ENCODE measurements at regions of chr4 and their contacts with region 1.

Region 1: GRCh38 chr4:38319456-38320342 is 344.3 kb upstream of the KLF3 start:
- DNase-seq: peak; percentile 93 to 96
- ATAC-seq: peak; percentile 89 to 92 (median 90)
- H3K4me3 ChIP-seq: peak overlapping the region; percentile 47
- H3K27ac ChIP-seq: peak overlapping the region; percentile 72
- H3K4me1 ChIP-seq: peaks cover 19% of the 10 kb centered on the region
- H3K27me3 ChIP-seq: no peaks in the 10 kb centered on the region
- CTCF ChIP-seq: peak; percentile 99

Region 2: GRCh38 chr4:38069271-38069760 is 250.4 kb before region 1 on chr4:
- intact Hi-C with region 1: loop called (anchors 5 to 10 kb)
- DNase-seq: no peak
- ATAC-seq: peak in 1 of 4 donors; percentile 48
- H3K4me3 ChIP-seq: no peak overlapping the region
- H3K27ac ChIP-seq: no peak overlapping the region
- H3K4me1 ChIP-seq: no peaks in the 10 kb centered on the region
- H3K27me3 ChIP-seq: no peaks in the 10 kb centered on the region
- CTCF ChIP-seq: no peak

Region 3: DNA sequence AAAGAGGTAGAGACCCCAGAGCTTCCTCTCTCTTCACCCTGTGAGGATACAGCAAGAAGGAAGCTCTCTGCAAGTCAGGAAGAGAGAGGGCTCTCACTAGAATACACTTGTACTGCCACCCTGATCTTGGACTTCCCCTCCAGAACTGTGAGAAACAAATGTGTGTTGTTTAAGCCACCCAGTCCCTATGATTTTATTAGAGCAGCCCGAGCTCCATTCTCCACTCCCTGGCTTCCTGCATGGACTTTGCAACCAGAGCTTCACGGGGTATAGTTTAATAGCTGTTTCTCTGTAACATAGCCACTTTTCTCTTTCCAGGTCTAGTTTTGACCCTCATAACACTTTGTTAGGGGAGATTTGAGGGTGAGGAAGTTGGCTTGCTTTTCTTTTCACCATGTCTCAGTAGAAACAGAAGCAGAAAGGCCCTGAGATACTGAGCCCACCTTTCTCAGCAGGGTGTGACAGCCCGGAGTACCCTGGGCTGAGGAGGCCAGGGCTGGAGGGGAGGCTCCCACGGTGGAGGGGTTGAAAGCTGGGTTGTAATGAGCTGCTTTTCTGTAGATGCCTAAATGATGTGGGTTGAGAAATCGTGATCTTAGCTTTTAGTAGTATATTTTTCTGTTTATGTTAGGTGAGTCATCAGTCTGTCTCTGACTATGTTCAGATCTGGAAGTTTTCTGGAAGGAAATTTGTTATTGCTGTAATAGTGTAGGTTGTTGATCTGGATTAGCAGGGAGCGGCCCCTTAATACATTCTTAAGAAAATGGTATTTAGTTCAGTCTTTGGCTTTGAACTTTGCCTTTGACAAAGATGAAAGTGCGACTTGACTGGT is 240.9 kb before region 1 on chr4:
- intact Hi-C with region 1: loop called in 1 of 2 experiments (anchors 10 kb)
- DNase-seq: no peak
- ATAC-seq: no peak
- H3K4me3 ChIP-seq: no peak overlapping the region
- H3K27ac ChIP-seq: peak overlapping the region; percentile 10
- H3K4me1 ChIP-seq: peaks cover 6% of the 10 kb centered on the region
- H3K27me3 ChIP-seq: no peaks in the 10 kb centered on the region
- CTCF ChIP-seq: no peak

Region 4: GRCh38 chr4:38190717-38191178 is 129.0 kb before region 1 on chr4:
- intact Hi-C with region 1: loop called (anchors 5 kb)
- DNase-seq: peak; percentile 46 to 79
- ATAC-seq: peak; percentile 97 to 99 (median 98)
- H3K4me3 ChIP-seq: no peak overlapping the region
- H3K27ac ChIP-seq: peak overlapping the region; percentile 74
- H3K4me1 ChIP-seq: peaks cover 16% of the 10 kb centered on the region
- H3K27me3 ChIP-seq: no peaks in the 10 kb centered on the region
- CTCF ChIP-seq: no peak

Region 5: GRCh38 chr4:38411092-38411491 is 91.4 kb after region 1 on chr4:
- intact Hi-C with region 1: no loop called
- DNase-seq: no peak
- ATAC-seq: no peak
- H3K4me3 ChIP-seq: no peak overlapping the region
- H3K27ac ChIP-seq: no peak overlapping the region
- H3K4me1 ChIP-seq: no peaks in the 10 kb centered on the region
- H3K27me3 ChIP-seq: no peaks in the 10 kb centered on the region
- CTCF ChIP-seq: no peak

Region 6: DNA sequence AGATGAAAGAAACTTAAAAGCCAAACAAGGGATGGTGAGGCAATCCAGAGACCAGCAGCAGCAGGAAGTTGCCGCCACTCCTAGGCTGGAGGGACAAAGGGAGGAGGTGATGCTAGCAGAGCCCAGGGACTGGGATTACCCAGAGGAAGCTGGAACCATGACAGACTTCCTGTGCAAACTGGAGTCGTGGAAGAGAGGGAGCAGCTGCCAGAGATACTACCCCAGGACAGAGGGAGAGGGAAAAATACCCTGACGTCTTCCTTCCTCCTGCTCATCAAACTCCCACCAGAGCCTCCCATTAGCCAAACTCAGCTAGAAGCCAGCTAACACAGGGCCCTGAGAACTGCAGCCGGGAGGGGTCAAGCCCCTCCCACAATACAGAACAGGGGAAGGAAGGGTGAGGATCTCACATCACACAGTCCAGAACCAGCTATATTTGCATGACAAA is 243.1 kb after region 1 on chr4:
- intact Hi-C with region 1: loop called in 1 of 2 experiments (anchors 10 kb)
- DNase-seq: peak; percentile 27 to 56
- ATAC-seq: peak in 3 of 4 donors; percentile 41 to 57 (median 48)
- H3K4me3 ChIP-seq: no peak overlapping the region
- H3K27ac ChIP-seq: no peak overlapping the region
- H3K4me1 ChIP-seq: no peaks in the 10 kb centered on the region
- H3K27me3 ChIP-seq: no peaks in the 10 kb centered on the region
- CTCF ChIP-seq: no peak

Region 7: GRCh38 chr4:38675146-38676121 is 355.7 kb after region 1 on chr4:
- intact Hi-C with region 1: loop called (anchors 2 kb)
- DNase-seq: peak; percentile 62 to 67
- ATAC-seq: peak; percentile 65 to 85 (median 72)
- H3K4me3 ChIP-seq: peak overlapping the region; percentile 29
- H3K27ac ChIP-seq: peak overlapping the region; percentile 54
- H3K4me1 ChIP-seq: peaks cover 87% of the 10 kb centered on the region
- H3K27me3 ChIP-seq: no peaks in the 10 kb centered on the region
- CTCF ChIP-seq: peak; percentile 96

Region 8: DNA sequence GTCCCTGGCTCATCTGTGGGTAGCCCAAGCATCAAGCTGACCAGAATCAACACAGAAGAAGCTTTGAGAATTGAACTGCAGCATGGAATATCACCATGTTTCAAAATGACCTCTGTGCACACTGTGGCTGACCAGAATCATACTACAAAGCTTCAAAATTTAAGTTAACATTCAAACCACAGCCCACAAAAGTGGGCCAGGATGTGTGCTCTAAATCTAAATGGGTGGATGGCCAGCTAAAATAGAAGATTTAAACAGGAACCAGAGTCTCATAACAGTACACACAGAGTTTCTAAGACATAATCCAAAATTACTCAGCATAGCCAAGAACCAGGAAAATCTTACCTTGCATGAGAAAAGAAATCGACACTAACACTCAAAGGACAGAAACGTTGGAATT is 390.4 kb after region 1 on chr4:
- intact Hi-C with region 1: no loop called
- DNase-seq: no peak
- ATAC-seq: no peak
- H3K4me3 ChIP-seq: no peak overlapping the region
- H3K27ac ChIP-seq: no peak overlapping the region
- H3K4me1 ChIP-seq: no peaks in the 10 kb centered on the region
- H3K27me3 ChIP-seq: no peaks in the 10 kb centered on the region
- CTCF ChIP-seq: no peak

Region 9: GRCh38 chr4:38730830-38731646 is 411.3 kb after region 1 on chr4:
- intact Hi-C with region 1: loop called in 1 of 2 experiments (anchors 5 kb)
- DNase-seq: peak; percentile 80 to 87
- ATAC-seq: peak; percentile 77 to 87 (median 83)
- H3K4me3 ChIP-seq: no peak overlapping the region
- H3K27ac ChIP-seq: no peak overlapping the region
- H3K4me1 ChIP-seq: no peaks in the 10 kb centered on the region
- H3K27me3 ChIP-seq: no peaks in the 10 kb centered on the region
- CTCF ChIP-seq: peak; percentile 96

Measured in psoas muscle (tissue), 8 donors.